ENCODE measurements at regions of chr9 and their contacts with region 1.

Region 1: GRCh38 chr9:116661037-116661954 is 25.8 kb upstream of the TRIM32 start:
- DNase-seq: peak; percentile 73
- H3K4me3 Mint-ChIP-seq: no peak overlapping the region
- H3K27ac Mint-ChIP-seq: no peak overlapping the region
- H3K4me1 Mint-ChIP-seq: peaks cover 9% of the 10 kb centered on the region
- H3K27me3 Mint-ChIP-seq: no peaks in the 10 kb centered on the region
- CTCF ChIP-seq: peak; percentile 76

Region 2: DNA sequence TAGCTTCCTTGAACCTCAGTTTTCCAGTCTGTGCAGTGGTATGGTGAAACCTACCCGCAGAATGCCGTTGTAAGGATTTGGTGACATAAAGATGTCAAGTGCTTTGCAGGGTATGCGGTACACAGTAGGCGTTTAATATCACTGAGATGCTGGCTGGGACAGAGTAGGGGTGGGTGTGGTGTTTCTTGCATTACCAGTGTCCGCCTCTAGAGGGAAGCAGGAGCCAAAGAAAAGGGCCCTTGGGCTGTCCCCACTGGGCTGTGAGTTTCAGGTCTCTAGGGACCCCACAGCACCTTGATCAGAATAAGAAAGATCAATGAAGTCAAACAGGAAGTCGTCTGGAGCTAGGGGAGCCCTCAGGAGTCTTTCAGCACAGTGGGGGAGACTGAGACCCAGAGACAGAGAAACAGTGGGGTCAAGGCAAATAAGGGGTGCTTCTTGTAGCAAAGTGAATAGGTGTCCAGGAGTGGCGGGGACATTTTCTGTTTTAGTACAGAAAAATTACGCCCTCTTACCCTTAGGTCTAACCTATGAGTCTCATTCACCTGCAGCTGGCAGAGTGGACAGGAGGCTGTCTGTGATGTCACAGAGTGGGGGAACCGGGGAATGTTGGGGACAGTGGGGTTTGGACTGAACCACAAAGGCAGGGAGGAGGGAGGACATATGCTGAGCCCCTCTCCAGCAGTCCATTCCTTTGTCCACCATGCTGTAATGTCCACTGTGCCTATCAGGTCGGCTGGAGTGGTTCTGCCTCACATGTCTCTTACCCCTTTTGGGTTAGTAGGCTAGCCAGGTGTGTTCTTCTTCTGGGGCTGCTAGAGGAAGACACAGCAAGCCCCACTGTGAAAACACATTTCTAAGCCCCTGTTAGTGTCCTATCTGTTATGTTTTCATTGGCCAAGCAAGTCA is 1999.0 kb before region 1 on chr9:
- CTCF ChIA-PET with region 1: no interaction called
- POLR2A ChIA-PET with region 1: no interaction called
- intact Hi-C with region 1: loop called (anchors 5 kb)
- DNase-seq: peak; percentile 64
- H3K4me3 Mint-ChIP-seq: no peak overlapping the region
- H3K27ac Mint-ChIP-seq: no peak overlapping the region
- H3K4me1 Mint-ChIP-seq: peaks cover 8% of the 10 kb centered on the region
- H3K27me3 Mint-ChIP-seq: no peaks in the 10 kb centered on the region
- CTCF ChIP-seq: peak; percentile 88

Region 3: GRCh38 chr9:116149844-116150243 is 511.5 kb before region 1 on chr9:
- CTCF ChIA-PET with region 1: interaction called, 3 read pairs
- POLR2A ChIA-PET with region 1: no interaction called
- intact Hi-C with region 1: loop called (anchors 2 kb)
- DNase-seq: peak; percentile 51
- H3K4me3 Mint-ChIP-seq: no peak overlapping the region
- H3K27ac Mint-ChIP-seq: no peak overlapping the region
- H3K4me1 Mint-ChIP-seq: peaks cover 24% of the 10 kb centered on the region
- H3K27me3 Mint-ChIP-seq: no peaks in the 10 kb centered on the region
- CTCF ChIP-seq: peak; percentile 47

Region 4: DNA sequence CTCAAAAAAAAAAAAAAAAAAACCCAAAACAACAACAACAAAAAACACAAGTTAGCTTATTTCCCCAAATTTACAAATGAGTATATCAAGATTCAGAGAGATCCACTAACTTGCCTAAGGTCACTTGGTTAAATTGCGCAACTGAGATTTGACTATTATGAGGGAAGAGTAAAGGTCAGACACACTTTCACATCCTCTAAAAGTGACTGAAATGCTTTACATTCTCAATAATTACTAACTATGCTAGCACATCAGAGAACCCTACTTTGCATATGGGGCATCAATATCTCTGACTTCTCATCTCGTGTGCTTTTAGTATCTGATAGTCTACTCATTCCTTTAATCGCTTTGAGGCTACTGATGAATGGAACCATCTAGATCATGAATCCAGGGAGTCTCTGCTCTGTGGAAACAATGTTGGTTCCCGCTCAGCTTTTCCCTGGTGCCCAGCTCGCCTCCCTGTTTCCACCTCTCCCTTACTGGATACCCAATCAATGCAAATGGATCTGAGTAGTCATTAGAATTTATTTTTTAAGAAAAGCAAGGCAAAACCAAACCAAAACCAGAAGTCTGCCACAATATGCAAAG is 156.3 kb before region 1 on chr9:
- CTCF ChIA-PET with region 1: no interaction called
- POLR2A ChIA-PET with region 1: no interaction called
- intact Hi-C with region 1: loop called (anchors 10 kb)
- DNase-seq: no peak
- H3K4me3 Mint-ChIP-seq: no peak overlapping the region
- H3K27ac Mint-ChIP-seq: no peak overlapping the region
- H3K4me1 Mint-ChIP-seq: peaks cover 35% of the 10 kb centered on the region
- H3K27me3 Mint-ChIP-seq: no peaks in the 10 kb centered on the region
- CTCF ChIP-seq: no peak

Region 5: GRCh38 chr9:116589392-116590354 is 71.6 kb before region 1 on chr9:
- CTCF ChIA-PET with region 1: interaction called, 5 read pairs
- POLR2A ChIA-PET with region 1: no interaction called
- intact Hi-C with region 1: loop called (anchors 5 kb)
- DNase-seq: peak; percentile 77
- H3K4me3 Mint-ChIP-seq: no peak overlapping the region
- H3K27ac Mint-ChIP-seq: no peak overlapping the region
- H3K4me1 Mint-ChIP-seq: peaks cover 5% of the 10 kb centered on the region
- H3K27me3 Mint-ChIP-seq: no peaks in the 10 kb centered on the region
- CTCF ChIP-seq: peak; percentile 36

Region 6: DNA sequence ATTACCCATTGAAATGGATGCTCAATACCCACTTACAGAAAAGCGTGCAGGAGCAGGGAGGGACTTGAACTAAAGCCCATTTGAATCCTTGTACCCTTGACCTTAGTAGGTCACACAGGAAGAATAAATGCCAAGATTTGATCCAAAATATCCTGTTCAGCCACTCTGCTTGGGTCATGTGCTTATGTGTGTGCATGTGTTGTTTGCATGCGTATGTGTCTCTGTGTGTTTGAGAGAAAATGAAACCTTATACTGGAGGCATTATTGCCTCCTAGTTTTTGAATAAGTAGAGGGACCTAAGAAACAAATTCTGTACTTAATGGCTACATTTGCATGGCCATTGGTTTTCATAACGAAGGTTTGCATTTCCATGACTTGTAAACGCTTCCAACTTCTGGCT is 37.6 kb before region 1 on chr9:
- CTCF ChIA-PET with region 1: no interaction called
- POLR2A ChIA-PET with region 1: no interaction called
- intact Hi-C with region 1: no loop called
- DNase-seq: no peak
- H3K4me3 Mint-ChIP-seq: no peak overlapping the region
- H3K27ac Mint-ChIP-seq: no peak overlapping the region
- H3K4me1 Mint-ChIP-seq: no peaks in the 10 kb centered on the region
- H3K27me3 Mint-ChIP-seq: no peaks in the 10 kb centered on the region
- CTCF ChIP-seq: no peak

Measured in MCF 10A (cell line).